Gastrocnemius medialis (tissue), 4 donors: ENCODE measurements at regions of chr6 and their contacts with region 1.

Region 1: DNA sequence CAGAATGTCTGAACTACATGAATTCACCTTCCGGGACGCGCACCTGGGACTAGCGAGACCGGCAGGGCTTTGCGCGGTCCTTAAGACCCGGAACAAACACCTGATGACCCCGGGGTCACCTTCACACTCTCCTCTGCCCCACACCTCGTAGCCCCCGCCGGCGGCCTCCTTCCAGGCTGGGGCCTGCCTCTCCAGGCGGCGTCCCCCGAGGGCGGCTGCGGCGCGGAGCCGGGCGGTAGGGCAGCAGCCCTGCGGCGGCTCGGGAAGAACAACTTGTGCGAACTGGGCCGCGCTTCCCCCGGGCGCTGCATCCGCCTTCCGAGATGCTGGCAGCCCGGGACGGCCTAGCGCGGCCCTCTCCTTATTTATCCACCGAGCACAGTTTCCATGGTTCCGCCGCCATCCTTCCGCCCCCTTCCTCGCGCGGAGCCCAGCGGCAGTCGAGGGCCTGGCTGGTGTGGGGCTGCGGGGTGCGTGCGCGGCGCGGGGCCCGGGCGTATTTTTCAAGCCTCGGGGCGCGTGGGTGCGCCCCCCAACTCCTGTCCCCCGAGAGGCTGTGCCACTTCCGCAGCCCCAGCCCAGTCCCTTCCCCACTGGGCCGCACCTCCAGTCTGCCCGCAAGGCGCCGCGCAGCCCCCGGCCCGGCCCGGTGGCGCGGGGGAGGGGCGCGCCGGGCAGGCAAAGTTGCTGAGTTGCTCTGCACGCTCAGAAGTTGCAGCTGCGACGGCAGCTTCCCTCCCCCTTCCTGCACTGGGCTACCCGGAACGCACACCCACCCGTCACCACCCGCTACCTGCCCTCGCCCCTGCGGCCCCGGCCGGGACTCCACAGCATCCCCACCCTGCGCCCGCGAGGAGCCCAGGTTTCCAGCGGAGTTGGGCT is 56.3 kb upstream of the RREB1 start:
- DNase-seq: peak; percentile 35 to 70
- ATAC-seq: peak; percentile 68 to 73
- H3K4me3 ChIP-seq: peak overlapping the region; percentile 66 to 77 (median 67)
- H3K27ac ChIP-seq: peak overlapping the region; percentile 84 to 91 (median 87)
- H3K4me1 ChIP-seq: peaks cover 7 to 18% of the 10 kb centered on the region in 2 donors
- H3K27me3 ChIP-seq: no peaks in the 10 kb centered on the region
- CTCF ChIP-seq: no peak
- POLR2A ChIP-seq: peak in 1 of 2 donors; percentile 31

Region 2: DNA sequence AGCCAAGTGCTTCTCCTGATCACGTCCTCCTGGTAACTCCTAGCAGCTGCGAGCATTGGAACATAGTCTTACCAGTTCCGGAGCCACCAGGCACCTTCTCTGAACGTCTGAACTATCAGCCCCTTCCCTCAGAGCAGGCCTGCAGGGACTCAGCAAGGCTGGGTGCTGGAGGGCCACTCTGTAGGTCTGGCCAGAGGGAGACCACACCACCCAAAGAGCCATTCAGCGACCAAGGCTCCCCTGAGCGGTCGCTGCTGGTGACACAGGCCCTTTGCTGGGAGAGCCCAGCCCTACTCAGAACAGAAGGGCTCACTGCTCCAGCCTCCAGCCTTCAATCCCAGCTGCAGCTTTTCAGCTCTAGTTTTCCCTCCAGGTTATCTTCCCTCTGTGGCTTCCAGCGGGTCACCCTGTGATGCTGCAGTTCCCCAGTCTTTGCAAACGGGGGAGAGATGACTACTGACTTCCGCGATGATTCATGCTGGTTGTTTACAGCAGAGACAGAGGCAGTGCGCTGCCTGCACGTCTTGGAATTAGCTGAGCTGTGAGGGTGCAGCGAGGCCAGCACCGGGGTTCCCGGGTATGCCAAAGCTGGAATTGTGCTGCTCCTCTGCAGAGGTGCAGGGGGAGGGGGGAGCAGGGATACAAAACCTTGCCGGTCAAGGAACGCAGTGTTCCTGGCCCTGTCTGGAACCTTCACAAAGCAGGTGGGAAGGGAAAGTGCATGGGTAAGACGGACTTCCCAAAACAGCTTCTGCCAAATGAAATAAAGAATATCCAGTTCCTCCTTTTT is 301.6 kb before region 1 on chr6:
- in situ Hi-C with region 1: no loop called
- intact Hi-C with region 1: loop called (anchors 5 kb)
- DNase-seq: peak; percentile 88 to 95
- ATAC-seq: peak; percentile 63 to 78
- H3K4me3 ChIP-seq: peak overlapping the region; percentile 38 to 70 (median 56)
- H3K27ac ChIP-seq: peak overlapping the region; percentile 98 to 99 (median 98)
- H3K4me1 ChIP-seq: peaks cover 45 to 47% of the 10 kb centered on the region in 2 donors
- H3K27me3 ChIP-seq: no peaks in the 10 kb centered on the region
- CTCF ChIP-seq: no peak
- POLR2A ChIP-seq: peak; percentile 56 to 88

Region 3: DNA sequence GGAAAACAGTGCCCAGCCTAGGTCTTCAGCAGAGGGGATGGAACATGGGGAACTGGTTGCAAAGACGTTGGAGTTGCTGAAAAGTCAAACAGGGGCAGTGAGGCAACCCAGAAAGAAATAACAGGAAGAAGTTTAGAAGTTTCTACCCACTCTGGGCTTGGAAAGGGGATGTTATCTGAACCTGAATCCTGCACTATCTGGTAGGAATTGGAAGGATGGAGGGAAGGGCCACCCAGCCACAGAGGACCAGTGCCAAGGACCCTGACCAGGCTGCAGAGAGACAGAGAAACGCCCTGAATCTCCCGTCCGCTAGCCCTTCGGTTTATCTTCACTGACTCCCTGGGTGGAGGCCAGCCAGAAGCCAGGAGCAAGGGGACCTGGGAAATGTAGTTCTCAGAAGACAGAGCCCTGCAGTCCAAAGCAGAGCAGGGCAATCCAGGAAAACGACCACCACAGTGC is 161.0 kb before region 1 on chr6:
- in situ Hi-C with region 1: no loop called
- intact Hi-C with region 1: loop called (anchors 2 kb)
- DNase-seq: peak in 1 of 2 donors; percentile 67
- ATAC-seq: no peak
- H3K4me3 ChIP-seq: peak overlapping the region in 1 of 4 donors; percentile 5
- H3K27ac ChIP-seq: peak overlapping the region; percentile 93 to 98 (median 96)
- H3K4me1 ChIP-seq: peaks cover 44 to 56% of the 10 kb centered on the region in 2 donors
- H3K27me3 ChIP-seq: no peaks in the 10 kb centered on the region
- CTCF ChIP-seq: no peak
- POLR2A ChIP-seq: no peak

Region 4: DNA sequence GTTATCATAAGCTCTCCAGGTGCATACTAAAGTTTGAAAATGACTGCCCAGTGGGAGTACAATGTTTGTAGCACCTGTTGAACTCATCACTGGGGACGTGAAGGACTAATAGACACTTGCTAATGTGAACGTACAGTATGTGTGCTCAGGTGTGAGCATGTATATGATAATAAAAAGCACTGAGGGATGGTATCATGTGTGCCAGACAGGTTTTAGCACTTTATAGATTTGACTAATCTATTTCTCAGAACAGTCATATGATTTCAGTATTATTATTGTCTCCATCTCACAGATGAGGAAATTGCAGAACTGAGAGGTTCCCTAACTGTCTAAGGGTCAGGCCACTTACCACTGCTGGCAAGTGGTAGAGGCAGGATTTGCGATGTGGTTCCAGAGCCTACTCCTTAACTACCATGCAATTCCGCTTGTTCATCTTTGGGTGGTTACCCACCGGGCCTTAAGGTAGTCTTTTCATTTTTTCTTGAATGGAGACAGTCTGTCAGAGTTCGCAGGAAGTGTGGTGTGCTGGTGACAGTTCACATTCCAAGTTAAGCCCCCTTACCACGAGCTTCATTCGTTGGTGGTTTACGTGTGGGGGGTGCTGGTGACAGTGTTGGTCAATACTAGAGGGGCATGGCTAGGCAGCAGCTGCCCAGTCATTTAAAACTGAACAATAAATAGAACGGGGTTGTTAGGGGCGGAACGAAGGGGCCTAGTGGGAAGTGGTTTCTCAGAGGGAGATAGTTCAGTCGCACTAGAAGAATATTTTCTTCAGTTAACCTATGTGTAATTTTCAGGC is 103.1 kb after region 1 on chr6:
- in situ Hi-C with region 1: no loop called
- intact Hi-C with region 1: loop called (anchors 5 kb)
- DNase-seq: no peak
- ATAC-seq: no peak
- H3K4me3 ChIP-seq: no peak overlapping the region
- H3K27ac ChIP-seq: peak overlapping the region; percentile 48 to 75 (median 72)
- H3K4me1 ChIP-seq: peaks cover 72 to 78% of the 10 kb centered on the region in 2 donors
- H3K27me3 ChIP-seq: no peaks in the 10 kb centered on the region
- CTCF ChIP-seq: no peak
- POLR2A ChIP-seq: no peak